ENCODE measurements at regions of chr7 and their contacts with region 1.

Region 1: DNA sequence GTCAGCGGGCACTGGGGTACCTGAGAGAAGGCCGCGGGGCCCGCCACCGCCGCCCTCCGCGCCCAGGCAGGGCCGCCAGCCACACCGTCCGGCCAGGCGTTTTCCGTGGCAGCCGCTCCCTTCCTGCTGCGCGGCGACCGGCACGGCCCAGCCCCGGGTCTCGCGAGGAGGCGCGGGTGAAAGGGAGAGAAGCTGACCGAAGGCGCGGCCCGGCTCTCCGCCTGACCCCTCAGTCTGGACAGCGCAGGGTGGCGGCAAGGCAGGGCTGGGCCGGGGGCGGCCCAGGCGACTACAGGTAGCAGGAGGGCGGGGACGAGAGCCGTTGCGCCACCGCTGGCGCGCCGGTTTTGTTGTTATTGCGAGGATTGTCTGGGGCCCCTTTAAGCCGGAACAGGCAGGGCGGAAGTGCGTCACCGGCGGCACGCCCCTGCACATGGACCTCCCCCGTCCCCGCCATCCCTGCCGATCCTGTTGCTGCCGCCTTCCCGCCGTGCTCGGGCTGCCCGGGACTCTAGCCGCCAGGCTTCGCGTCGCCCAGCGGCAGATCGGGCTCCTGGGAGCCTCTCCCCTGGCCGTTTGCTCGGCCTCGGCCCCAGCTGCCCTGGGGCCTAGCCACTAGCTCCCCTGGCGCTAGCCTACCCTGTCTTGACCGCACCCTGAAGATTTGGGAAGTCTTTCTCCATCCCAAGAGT is at the start of gene HERPUD2:
- DNase-seq: peak; percentile 94
- ATAC-seq: peak; percentile 84
- H3K4me3 Mint-ChIP-seq: peak within 1 kb of the TSS; percentile 85
- H3K27ac Mint-ChIP-seq: peak within 1 kb of the TSS; percentile 98
- H3K4me1 Mint-ChIP-seq: peaks cover 37% of the 10 kb centered on the region
- H3K27me3 Mint-ChIP-seq: no peaks in the 10 kb centered on the region
- total RNA-seq, gene HERPUD2: 30.4 to 31.3 TPM

Region 2: DNA sequence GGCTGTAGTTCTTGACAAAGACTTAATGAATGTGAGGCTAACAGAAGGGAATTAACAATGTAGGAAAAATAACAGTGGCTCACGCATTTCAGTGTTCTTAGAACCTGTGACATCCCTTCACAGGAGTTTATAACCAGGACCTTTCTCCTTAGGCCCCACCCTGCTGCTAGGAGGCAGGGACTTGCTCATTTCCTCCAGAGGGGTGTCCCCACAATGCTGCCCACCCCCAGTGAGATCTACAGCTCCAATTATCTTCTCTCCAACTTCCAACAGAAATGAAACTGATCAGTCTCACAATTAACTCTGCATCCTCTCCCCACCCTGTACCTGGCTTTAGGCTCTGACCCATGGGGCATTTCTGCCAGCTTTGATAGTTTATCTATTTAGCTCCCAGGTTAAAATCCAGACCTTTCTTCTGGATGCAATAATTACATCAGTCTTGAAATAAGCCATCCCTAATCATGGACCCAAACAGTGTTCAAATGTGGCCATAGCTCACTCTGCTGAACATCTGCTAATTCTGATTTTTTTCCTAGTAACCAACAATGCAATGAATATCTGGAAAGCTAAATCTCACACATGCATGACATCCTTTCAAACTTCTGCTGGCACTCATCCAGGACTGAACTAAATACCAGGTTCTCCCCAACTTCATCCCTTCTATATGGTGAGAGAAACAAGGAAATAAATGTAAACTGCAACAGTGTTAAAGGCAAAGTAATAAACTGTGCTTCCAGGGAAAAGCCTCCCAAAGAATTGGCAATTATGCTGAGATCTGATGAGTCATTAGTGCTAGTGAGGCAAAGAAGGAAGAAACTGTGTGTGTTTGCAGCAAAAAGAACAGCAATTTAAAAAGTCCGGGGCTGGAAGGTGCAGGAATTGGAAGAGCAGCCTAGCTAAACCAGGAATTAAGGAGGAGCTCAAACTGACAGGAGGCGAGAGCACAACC is 64.6 kb before region 1 on chr7:
- CTCF ChIA-PET with region 1: no interaction called
- POLR2A ChIA-PET with region 1: no interaction called
- DNase-seq: no peak
- ATAC-seq: peak; percentile 27
- H3K4me3 Mint-ChIP-seq: no peak overlapping the region
- H3K27ac Mint-ChIP-seq: no peak overlapping the region
- H3K4me1 Mint-ChIP-seq: no peaks in the 10 kb centered on the region
- H3K27me3 Mint-ChIP-seq: no peaks in the 10 kb centered on the region

Region 3: DNA sequence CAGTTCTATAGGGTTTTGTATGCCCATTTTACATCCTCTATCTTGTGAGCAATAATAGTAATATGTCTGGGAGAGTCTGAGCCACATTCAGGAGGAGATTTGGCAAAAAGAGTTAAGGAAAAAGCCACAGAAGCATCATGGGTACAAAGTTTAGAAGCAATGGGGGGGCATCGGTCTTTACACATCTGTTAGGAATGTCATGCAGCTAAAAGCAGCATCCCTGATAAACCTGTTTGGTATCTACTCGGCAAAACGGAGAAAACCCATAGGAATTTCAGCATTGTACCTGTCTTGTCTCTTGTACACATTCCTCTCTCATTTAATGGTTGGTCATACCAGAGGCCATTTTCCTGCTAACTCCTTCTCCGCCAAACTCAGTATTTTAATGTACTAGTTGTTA is 12.5 kb after region 1 on chr7:
- CTCF ChIA-PET with region 1: interaction called, 32 read pairs
- POLR2A ChIA-PET with region 1: interaction called, 35 read pairs
- DNase-seq: no peak
- ATAC-seq: no peak
- H3K4me3 Mint-ChIP-seq: no peak overlapping the region
- H3K27ac Mint-ChIP-seq: no peak overlapping the region
- H3K4me1 Mint-ChIP-seq: peaks cover 32% of the 10 kb centered on the region
- H3K27me3 Mint-ChIP-seq: peaks cover 2% of the 10 kb centered on the region

Region 4: GRCh38 chr7:35723011-35723410 is 28.1 kb after region 1 on chr7:
- CTCF ChIA-PET with region 1: interaction called, 116 read pairs
- POLR2A ChIA-PET with region 1: interaction called, 64 read pairs
- DNase-seq: no peak
- ATAC-seq: peak; percentile 14
- H3K4me3 Mint-ChIP-seq: no peak overlapping the region
- H3K27ac Mint-ChIP-seq: no peak overlapping the region
- H3K4me1 Mint-ChIP-seq: peaks cover 54% of the 10 kb centered on the region
- H3K27me3 Mint-ChIP-seq: peaks cover 2% of the 10 kb centered on the region

Region 5: DNA sequence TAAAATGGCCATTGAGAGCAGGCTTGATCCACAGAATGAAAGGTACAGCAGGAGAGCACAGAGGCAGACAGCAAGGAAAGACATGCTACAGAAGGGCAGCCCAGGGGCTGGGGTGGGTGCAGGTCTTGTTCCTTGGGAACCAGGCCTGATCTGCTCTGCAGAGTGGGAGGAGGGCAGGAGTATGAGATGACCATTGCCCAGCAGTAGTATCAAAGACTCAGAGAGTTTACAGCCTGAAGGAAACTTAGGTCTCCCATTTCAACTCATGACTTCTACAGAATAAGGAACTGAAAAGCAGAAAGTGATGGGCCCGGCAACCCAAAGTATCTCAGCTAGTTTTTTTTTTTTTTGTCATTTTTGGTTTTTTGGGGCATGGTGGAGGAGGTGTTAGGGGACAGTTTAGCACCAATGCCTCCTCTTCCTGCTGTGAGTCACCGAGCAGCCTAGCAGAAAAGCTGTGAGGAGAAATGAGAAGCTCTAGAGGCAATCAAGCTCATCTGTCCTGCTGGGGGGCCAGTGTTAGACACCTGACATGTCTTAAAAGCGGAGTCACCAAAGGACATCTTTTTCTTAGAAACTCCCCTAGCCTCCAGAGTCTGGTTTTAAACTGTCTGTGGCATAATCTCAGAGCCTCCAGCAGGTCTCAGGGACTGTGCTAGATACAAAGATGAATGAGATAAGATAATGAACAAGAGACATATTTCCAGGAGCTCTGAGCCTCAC is 34.3 kb after region 1 on chr7:
- CTCF ChIA-PET with region 1: interaction called, 116 read pairs
- POLR2A ChIA-PET with region 1: interaction called, 64 read pairs
- DNase-seq: peak; percentile 64
- ATAC-seq: peak; percentile 53
- H3K4me3 Mint-ChIP-seq: peak overlapping the region; percentile 34
- H3K27ac Mint-ChIP-seq: peak overlapping the region; percentile 78
- H3K4me1 Mint-ChIP-seq: peaks cover 62% of the 10 kb centered on the region
- H3K27me3 Mint-ChIP-seq: peaks cover 1% of the 10 kb centered on the region

Region 6: DNA sequence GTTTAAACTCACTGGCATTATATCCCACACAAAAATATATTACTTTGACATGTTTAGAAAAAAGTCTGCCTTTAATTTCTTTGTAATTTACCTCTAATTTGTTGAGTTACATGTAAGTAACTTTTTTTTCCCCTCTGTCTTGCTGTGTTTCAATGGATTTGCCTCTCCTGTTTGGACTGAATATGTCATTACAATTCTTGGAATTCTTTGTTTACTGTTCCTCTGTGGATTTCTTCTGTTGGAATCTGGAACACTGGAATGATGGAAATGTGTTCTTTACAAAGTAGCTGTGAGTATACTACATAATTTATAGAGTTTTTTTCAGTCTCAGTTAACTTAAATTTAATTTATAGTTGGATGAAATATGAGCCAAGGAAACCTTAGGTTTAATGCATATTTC is 136.3 kb after region 1 on chr7:
- CTCF ChIA-PET with region 1: no interaction called
- POLR2A ChIA-PET with region 1: no interaction called
- DNase-seq: no peak
- ATAC-seq: no peak
- H3K4me3 Mint-ChIP-seq: no peak overlapping the region
- H3K27ac Mint-ChIP-seq: no peak overlapping the region
- H3K4me1 Mint-ChIP-seq: peaks cover 22% of the 10 kb centered on the region
- H3K27me3 Mint-ChIP-seq: no peaks in the 10 kb centered on the region